Activated CD4-positive, alpha-beta memory T cell treated with anti-CD3 and anti-CD28 coated beads, Interleukin-2, amount 10 ng/mL, durations not matched to agents 7 days and 5 days (primary cell): ENCODE measurements at regions of chr3 and their contacts with region 1.

Region 1: DNA sequence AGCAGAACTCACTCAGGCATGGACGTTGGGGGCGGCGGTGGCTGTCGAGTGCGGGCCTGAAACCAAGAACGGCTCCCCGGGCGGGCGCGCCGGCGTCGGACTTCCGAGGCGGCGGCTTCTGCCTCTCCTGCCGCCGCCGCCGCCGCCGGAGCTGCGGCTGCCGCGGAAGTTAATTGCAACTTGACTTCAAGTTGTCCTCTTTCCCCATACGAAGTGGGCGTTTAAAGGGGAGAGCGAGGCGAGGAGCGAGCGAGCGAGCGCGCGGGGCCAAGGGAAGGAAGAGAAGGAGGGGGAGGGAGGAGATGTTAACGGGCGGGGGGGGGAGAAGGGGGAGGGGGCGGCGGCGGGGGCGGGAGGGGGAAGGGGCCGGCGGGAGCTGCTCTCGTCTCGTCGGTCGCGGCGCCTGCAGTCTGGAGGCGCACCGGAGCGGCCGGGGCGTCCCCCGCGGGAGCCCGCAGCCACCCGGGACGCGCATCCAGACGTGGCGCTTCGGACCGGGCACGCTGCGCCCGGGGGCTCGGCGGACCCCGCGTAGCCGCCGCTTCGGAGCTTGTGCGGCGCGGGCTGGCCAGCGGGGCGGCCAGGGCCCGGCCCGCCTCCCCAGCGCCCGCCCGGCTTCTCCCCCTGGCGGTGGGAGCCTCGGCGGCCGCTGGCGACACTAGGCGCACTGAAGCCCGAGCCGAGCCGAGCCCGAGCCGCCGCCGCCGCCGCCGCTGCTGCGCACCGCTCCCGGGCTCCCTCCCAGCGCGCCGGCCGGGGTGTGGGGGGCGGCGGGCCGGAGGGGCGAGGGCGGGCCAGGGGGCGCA is 19.7 kb upstream of the SATB1 start:
- DNase-seq: peak; percentile 81
- H3K4me3 Mint-ChIP-seq: peak overlapping the region; percentile 94
- H3K27ac Mint-ChIP-seq: peak overlapping the region; percentile 91
- H3K4me1 Mint-ChIP-seq: peaks cover 39% of the 10 kb centered on the region
- H3K27me3 Mint-ChIP-seq: no peaks in the 10 kb centered on the region

Region 2: GRCh38 chr3:18419232-18419631 is 25.6 kb before region 1 on chr3:
- CTCF ChIA-PET with region 1: interaction called, 5 read pairs
- POLR2A ChIA-PET with region 1: interaction called, 79 read pairs
- DNase-seq: no peak
- H3K4me3 Mint-ChIP-seq: peak overlapping the region; percentile 45
- H3K27ac Mint-ChIP-seq: peak overlapping the region; percentile 44
- H3K4me1 Mint-ChIP-seq: peaks cover 82% of the 10 kb centered on the region
- H3K27me3 Mint-ChIP-seq: no peaks in the 10 kb centered on the region

Region 3: DNA sequence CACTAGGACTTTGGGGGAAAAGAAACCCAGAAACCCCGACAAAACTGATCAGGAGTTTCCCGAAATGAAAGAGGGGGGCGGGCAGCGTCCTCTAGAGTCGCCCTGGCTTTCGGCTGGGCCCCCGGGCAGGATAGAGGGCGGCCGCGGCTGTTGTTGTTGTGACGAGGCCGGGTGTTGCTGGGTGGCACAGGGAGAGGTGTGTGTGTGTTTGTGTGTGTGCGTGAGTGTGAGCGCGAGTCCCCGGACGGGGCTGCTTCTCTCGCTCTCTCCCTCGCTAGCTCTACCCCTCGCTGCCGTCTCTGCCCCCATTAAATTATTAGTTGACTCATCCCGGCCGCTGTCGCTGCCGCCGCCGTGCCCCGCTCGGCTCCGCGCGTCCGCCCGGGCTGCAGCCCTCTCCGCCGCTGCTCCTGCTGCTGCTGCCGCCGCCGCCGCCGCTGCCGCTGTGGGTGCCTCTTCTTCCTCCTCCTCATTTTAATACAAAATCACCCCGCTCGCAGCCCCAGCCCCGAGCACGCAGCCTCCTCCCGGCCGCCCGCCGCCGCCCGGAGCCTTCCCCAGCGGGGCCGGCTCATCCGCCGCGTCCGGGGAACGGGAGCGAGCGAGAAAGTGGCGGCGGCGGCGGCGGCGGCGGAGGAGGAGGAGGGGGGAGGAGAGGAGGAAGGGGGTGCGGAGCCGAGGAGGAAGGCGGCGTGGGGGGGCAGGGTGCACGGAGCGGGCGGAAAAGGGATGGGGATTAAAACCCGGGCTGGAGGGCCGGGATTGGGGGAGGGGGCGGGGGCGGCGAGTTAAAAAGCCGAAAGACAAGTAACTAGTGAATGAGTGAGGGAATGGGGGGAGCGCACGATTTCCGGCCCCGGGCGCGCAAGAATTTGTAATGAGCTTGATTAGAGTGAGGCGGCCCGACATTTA is 19.8 kb before region 1 on chr3 and contains the start of gene SATB1:
- CTCF ChIA-PET with region 1: interaction called, 17 read pairs
- POLR2A ChIA-PET with region 1: interaction called, 145 read pairs
- DNase-seq: peak; percentile 71
- H3K4me3 Mint-ChIP-seq: peak within 1 kb of the TSS; percentile 81
- H3K27ac Mint-ChIP-seq: peak within 1 kb of the TSS; percentile 79
- H3K4me1 Mint-ChIP-seq: peaks cover 67% of the 10 kb centered on the region
- H3K27me3 Mint-ChIP-seq: no peaks in the 10 kb centered on the region
- total RNA-seq, gene SATB1: 263 to 267 TPM

Region 4: DNA sequence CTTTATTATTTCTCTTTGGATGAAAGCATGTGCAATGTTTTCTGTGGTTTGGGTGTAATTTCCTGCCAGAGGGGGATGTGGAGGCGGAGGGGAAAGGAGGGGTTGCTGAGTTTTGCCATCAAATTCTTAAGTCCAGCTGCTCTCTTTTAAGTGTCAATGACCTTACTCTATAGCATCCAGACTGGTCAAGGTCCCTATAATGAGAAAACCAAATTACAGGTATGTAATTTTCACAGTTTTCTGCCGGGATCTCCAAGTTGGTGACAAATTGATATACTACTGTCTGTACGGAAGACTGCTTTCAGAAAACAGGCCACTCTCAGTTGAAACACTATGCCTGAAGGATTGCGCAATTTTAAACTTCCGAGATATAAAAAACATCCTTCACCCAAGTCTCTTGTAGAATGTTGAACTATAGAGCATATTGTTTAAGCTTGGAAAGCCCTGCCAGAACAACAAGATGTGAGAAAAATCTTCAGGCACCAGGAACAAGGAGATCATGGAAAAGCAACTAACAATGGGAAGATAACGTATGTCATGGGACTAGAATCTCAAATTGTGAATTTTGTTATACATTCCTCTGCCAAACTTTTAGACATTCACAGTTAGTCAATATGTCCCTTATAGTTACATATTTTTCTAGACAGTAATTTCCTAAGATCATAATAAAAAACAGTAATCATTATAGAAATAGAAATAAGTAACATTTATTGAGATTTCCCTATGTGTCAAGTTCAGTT is 281.0 kb after region 1 on chr3:
- CTCF ChIA-PET with region 1: interaction called, 4 read pairs
- POLR2A ChIA-PET with region 1: interaction called, 18 read pairs
- DNase-seq: peak; percentile 47
- H3K4me3 Mint-ChIP-seq: peak overlapping the region; percentile 70
- H3K27ac Mint-ChIP-seq: peak overlapping the region; percentile 86
- H3K4me1 Mint-ChIP-seq: peaks cover 64% of the 10 kb centered on the region
- H3K27me3 Mint-ChIP-seq: no peaks in the 10 kb centered on the region